Right ventricle myocardium inferior (tissue), 1 donor: ENCODE measurements at regions of chr5 and their contacts with region 1.

Region 1: DNA sequence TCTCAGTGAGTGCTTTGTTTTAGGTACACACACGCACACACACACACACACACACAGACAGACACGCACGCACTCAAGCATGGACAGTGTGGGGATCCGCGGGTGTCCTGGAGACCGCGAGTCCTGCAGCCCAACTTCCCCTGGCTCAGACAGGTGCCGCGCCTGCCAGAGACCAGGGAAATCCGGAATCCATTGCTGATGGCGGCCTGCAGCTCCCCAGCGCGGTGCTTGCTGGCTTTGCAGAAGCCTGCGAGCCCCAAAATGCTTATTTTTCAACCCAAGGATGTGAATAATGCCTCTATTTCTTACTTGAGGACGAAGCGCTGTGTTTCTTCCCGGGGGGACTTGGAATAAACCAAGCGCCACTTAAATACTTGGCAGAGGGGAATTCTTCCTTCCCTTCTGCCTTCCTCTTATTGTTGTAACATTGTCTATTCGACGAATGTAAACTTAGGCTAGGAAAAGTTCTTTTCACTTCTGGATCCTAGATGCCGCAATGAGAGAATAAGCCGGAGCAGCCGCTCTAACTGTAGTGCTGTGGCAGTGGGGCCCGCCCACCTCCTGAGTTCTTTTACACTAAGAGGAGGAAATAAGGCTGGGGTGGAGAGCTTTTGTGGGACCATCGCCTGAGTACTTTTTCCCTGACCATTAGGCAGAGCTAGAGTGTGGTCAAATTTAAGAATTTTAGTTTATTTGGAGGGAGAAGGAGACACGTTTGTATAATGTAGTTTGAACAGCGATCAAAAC is 802 bp downstream of the ITGA2 start:
- DNase-seq: no peak
- ATAC-seq: peak; percentile 60

Region 2: DNA sequence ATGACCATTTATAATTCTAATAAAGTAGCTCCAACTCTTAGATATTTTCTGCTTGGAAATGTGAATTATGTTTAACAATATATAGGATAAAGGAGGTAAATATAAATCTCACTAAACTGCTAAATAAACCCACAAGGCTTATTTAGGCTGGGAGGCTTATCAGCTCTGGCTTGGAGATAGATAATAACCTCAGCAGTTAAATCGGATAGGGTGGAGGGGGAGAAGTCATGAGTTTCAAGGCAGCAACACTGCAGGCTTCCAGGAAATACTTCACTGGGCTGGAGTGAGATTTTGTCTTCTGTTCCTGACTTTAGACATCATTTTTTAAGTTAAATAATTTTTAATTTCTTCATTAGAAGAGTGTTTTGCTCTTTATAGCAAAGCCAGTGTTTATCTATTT is 80.8 kb before region 1 on chr5:
- intact Hi-C with region 1: no loop called
- DNase-seq: no peak
- ATAC-seq: no peak

Region 3: DNA sequence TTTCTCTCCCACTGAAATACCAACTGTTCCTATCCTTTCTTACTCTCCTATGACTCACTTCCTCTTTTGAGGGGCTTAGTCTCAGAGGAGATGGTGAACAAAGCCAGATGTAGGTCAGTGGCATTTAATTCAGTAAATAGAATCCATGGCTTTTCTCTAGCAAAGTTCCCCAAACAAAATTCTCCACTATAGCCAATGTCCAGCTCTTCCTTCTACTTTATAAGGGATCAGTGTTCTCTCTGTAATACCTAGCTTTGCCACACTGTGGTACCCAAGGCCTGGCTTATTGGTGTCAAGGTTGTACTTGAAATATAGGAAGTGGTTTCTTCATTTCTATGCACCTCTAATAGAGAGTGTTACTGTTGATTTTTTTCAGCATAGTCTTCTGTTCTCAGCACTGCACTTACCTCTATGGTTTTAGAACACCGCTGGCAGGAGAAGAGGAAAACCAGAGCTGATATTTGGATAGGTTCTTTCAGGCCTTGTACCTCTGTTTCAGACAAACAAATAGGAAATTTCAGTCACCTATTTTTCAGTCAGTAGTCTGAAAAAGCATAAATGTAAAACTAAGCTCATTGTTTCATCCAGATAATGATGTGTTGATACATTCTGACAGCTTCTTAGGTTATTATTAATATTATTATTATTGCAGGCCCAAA is 41.4 kb before region 1 on chr5:
- intact Hi-C with region 1: loop called (anchors 5 kb)
- DNase-seq: no peak
- ATAC-seq: peak; percentile 96

Region 4: GRCh38 chr5:53035868-53036381 is 46.0 kb after region 1 on chr5:
- intact Hi-C with region 1: loop called (anchors 10 kb)
- DNase-seq: no peak
- ATAC-seq: no peak